Left cardiac atrium (tissue), 4 donors: ENCODE measurements at regions of chr11 and their contacts with region 1.

Region 1: DNA sequence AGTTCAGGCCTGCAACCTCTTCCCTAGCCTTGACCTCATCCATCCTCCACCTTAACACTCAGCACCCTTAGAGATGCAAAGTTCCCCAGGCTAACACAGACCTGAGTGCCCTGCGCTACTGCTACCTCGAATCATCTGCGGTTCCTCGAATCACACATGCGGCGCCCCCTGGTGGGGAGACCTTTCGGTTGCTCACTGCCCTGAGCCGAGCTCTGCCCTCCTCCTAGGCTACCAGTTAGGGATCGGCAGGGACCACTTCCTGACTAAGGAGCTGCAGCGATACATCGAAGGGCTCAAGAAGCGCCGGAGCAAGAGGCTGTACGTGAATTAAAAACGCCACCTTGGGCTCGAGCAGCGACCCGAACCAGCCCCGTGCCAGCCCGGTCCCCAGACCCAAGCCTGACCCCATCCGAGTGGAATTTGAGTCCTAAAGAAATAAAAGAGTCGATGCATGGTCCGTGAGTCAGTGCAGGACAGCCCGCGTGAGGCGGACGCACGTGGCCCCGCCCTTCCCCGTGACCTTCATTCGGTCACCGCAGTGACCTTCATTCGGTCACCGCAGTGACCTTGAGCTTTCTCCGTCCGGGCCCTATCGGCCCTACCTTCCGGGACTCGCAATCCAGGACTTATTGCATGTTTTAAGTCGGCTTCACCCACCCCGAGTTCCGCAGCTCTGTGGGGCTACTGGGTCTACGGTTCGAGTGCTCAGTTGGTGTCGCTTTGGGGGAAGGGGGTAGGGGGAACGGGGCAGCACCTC is 830 bp upstream of the ESRRA start:
- DNase-seq: peak; percentile 96
- ATAC-seq: peak; percentile 43 to 57

Region 2: DNA sequence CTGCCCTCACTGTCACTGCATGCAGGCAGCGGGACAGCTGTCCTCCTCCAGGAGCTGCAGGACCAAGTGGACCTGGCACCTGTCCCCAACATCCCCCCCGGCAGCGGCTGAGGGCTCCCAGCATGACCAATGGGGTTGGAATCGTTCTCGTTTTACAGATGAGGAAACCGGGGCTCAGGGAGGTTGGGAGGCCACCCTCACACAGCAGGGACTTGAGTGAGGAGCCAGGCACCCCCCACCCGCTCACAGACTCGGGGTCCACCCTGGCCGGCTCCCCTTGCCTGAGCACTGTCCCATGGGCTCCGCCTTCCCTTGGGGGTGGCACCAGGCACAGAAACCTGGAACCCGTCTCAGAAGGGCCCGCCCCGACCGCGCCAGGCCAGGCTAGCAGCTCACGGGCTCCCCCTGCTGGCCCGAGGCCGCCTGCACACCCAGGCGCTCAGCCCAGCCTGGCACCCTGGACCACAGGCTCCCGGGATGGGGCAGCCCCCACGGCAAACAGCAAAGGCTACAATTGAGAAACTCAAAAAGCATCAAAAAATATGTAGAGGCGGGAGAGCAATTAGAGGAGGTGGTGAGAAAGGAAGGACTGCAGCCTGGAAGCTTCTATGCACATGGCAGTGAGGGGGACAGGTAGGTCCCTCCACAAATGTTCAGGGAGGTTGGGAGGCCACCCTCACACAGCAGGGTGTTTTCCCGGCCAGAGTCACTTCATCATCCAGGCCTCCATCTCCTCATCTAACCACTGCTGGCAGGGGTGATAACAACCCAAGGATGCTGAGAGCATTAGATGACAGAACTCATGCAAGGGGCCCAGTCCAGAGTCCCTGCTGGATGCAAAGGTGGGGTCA is 151.4 kb before region 1 on chr11:
- intact Hi-C with region 1: no loop called
- DNase-seq: peak; percentile 71
- ATAC-seq: peak; percentile 50 to 77

Region 3: DNA sequence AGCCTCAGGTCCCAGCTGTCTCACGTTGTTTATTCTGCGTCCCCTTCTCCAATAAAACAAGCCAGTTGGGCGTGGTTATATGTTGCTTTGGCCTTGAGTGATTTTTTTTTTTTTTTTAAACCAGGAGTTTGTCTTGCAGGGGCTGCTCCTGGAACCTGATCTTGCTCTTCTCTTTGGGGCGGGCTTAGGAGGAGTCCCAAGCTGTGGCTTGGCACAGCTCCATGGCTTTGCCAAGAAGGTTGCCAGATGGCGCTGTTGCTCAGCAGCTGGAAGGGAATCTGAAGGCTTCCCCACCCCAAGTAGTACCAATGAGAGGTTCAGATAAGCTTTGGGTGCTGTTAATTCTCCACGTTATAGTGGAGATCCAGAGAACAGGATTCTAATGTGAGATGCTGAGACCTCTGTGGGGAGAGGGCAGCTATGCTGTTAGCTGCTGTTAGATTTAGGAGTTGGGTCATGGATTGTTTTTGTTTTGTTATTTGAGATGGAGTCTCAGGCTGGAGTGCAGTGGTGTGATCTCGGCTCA is 100.0 kb before region 1 on chr11:
- intact Hi-C with region 1: loop called (anchors 5 to 10 kb)
- DNase-seq: peak; percentile 89
- ATAC-seq: peak; percentile 41 to 70

Region 4: DNA sequence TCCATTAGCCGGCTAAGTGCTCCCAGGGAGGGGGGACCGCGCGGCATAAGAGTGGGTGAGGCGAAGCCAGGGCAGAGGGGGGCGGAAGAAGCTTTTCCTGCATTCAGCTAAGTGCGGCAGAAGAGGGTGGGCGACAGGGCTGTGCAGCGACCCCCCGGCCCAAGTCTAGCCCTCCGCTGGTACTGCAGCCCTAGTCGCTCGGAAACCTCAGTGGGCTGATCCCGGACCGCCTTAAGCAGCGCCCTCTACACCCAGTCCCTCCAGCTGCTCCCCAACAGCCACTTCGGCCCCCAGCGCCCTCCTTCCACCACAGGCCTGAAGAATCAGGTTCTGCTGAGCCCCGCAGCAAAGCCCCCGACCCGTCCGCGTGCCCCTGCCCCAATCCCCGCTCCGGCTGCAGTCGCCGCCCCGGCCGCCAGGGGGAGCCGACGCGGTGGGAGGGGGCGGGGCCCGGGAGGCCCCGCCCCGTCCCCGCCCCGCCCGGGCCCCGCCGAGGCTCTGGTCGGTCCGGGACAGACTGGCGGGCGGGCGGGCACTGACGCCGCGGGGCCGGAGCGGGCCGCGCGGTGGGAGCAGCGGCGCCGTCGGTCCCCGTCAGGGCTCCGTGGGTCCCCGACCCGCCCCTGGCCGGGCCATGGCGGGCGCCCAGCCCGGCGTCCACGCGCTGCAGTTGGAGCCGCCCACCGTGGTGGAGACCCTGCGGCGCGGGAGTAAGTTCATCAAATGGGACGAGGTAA is 53.3 kb before region 1 on chr11 and contains the start of gene PLCB3:
- intact Hi-C with region 1: loop called in 1 of 2 experiments (anchors 5 kb)
- DNase-seq: no peak
- ATAC-seq: peak; percentile 57 to 77
- total RNA-seq, gene PLCB3: 13.6 to 14.4 TPM